Ovary (tissue), 10 donors: ENCODE measurements at regions of chr12 and their contacts with region 1.

Region 1: GRCh38 chr12:109428037-109428629 is 49.0 kb downstream of the KCTD10 start:
- DNase-seq: peak; percentile 73 to 87 (median 83)
- H3K4me3 ChIP-seq: no peak overlapping the region
- H3K27ac ChIP-seq: no peak overlapping the region
- H3K4me1 ChIP-seq: no peaks in the 10 kb centered on the region
- H3K27me3 ChIP-seq: no peaks in the 10 kb centered on the region
- CTCF ChIP-seq: peak; percentile 70 to 91 (median 73)
- EP300 ChIP-seq: no peak
- POLR2A ChIP-seq: no peak

Region 2: DNA sequence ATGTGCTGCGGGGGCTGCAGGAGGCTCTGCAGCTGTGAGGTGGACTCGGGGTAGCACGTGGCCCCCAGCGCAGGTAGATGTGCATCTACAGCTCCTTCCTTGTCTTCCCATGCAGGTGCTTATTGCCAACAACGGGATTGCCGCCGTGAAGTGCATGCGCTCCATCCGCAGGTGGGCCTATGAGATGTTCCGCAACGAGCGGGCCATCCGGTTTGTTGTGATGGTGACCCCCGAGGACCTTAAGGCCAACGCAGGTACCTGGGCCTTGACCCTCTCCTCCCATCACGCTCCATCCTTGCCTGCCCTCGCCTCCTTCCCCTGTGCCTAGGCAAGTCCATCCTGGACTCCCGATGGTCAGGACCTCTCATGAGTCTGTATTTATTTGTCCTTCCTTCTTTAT is 260.4 kb before region 1 on chr12:
- intact Hi-C with region 1: no loop called
- DNase-seq: no peak
- H3K4me3 ChIP-seq: no peak overlapping the region
- H3K27ac ChIP-seq: no peak overlapping the region
- H3K4me1 ChIP-seq: no peaks in the 10 kb centered on the region
- H3K27me3 ChIP-seq: no peaks in the 10 kb centered on the region
- CTCF ChIP-seq: no peak
- EP300 ChIP-seq: no peak
- POLR2A ChIP-seq: no peak

Region 3: GRCh38 chr12:109178532-109178931 is 249.6 kb before region 1 on chr12:
- intact Hi-C with region 1: no loop called
- DNase-seq: no peak
- H3K4me3 ChIP-seq: no peak overlapping the region
- H3K27ac ChIP-seq: no peak overlapping the region
- H3K4me1 ChIP-seq: no peaks in the 10 kb centered on the region
- H3K27me3 ChIP-seq: no peaks in the 10 kb centered on the region
- CTCF ChIP-seq: no peak
- EP300 ChIP-seq: no peak
- POLR2A ChIP-seq: no peak

Region 4: DNA sequence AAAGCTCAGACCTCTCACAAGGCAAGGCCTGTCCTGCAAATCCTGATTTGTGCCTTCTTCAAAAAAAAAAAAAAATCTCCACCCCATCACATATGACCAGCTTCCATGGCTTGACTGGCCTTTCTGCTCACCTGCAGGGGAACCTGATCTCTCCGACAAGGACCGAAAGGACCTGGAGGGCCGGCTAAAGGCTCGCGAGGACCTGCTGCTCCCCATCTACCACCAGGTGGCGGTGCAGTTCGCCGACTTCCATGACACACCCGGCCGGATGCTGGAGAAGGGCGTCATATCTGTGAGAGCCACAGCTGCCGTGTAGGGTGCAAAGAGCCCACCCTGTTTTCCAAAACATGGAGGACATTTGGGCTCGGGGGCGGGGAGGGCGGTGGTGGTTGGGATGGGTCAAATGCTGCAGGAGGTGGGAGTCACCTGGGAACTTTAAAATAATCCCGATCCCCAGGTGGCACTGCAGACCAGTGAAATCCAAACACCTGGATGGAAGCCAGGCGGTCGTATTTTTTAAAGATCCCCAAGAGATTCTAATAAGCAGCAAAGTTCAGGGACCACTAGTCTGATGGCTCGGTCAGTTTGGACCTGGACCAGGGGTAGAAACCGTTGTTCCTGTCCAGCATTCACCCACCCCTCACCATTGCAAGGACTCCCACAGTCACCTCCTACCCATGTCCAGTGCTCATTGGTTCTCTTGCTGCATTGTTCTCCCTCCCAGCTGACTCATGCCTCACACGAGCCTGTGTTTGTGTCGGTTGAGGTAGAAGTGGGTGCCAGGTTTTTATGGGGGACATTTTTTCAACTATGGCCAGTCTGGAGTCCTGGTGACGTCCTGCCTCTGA is 163.8 kb before region 1 on chr12:
- intact Hi-C with region 1: no loop called
- DNase-seq: peak; percentile 62 to 87 (median 77)
- H3K4me3 ChIP-seq: no peak overlapping the region
- H3K27ac ChIP-seq: no peak overlapping the region
- H3K4me1 ChIP-seq: no peaks in the 10 kb centered on the region
- H3K27me3 ChIP-seq: no peaks in the 10 kb centered on the region
- CTCF ChIP-seq: peak in 2 of 3 donors; percentile 51 to 65
- EP300 ChIP-seq: no peak
- POLR2A ChIP-seq: no peak

Region 5: DNA sequence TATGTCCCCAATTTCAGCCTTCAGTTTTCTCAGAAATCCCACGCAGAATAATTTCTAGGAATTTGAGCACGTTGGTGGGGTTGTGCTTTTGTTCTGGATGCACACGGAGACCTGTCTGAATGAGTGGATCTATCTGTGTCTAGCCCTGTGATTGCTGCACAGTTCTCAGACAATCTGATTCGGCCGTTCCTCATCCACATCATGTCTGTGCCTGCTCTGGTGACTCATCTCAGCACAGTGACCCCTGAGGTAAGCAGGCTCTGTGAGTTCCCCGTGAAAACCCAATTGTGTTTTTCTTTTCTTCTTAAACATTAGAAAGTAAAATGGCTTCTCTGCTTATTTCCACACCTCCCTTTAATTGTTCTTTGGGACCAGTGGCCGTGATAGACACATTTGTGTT is 69.5 kb after region 1 on chr12:
- intact Hi-C with region 1: loop called in 1 of 4 experiments (anchors 10 kb)
- DNase-seq: no peak
- H3K4me3 ChIP-seq: no peak overlapping the region
- H3K27ac ChIP-seq: no peak overlapping the region
- H3K4me1 ChIP-seq: no peaks in the 10 kb centered on the region
- H3K27me3 ChIP-seq: no peaks in the 10 kb centered on the region
- CTCF ChIP-seq: no peak
- EP300 ChIP-seq: no peak
- POLR2A ChIP-seq: no peak

Region 6: DNA sequence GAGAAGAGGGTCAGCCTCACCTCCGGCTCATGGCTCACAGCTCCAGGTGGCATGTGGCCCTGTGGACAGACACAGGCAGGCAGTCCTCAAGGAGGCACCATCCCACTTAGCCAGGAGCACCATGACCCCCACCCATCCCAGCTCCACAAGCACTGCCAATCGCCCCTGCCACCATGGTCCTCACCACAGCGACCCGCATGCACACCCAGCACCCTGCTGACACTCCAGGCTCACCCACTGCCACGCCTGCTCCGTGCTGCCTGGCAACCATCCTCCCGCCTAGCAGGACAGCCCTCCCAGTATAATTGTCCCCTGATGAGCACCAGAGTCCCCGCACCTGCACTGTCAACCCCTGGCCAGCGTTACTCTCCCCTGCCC is 354.2 kb after region 1 on chr12:
- intact Hi-C with region 1: loop called in 2 of 4 experiments (anchors 5 to 10 kb)
- DNase-seq: no peak
- H3K4me3 ChIP-seq: no peak overlapping the region
- H3K27ac ChIP-seq: no peak overlapping the region
- H3K4me1 ChIP-seq: no peaks in the 10 kb centered on the region
- H3K27me3 ChIP-seq: no peaks in the 10 kb centered on the region
- CTCF ChIP-seq: no peak
- EP300 ChIP-seq: no peak
- POLR2A ChIP-seq: no peak